OCI-LY7 (cell line): ENCODE measurements at regions of chr3 and their contacts with region 1.

Region 1: GRCh38 chr3:139353920-139354556 is 10.2 kb downstream of the MRPS22 start:
- DNase-seq: peak; percentile 40
- H3K4me3 ChIP-seq: no peak overlapping the region
- H3K27ac ChIP-seq: no peak overlapping the region
- H3K4me1 ChIP-seq: no peaks in the 10 kb centered on the region
- CTCF ChIP-seq: peak; percentile 79

Region 2: DNA sequence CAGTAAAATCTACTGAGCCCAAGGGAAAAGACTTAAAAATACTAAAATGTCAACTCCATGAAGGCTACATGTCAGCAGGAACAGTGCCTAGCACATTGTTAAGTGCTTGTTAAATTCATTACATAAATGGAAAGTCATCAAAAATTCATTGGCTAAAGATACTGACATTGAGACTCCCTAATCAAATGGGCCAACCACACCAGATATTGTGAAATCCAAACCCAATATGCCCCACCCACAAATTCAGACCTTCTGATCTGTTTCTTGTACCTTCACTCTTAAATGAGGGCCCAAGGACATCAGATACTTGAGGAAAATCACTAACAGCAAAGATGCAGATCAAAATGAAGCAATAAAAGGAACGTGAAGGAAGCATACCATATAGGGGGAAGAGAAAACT is 10.5 kb after region 1 on chr3:
- CTCF ChIA-PET with region 1: interaction called, 14 read pairs
- POLR2A ChIA-PET with region 1: interaction called, 13 read pairs
- intact Hi-C with region 1: no loop called
- DNase-seq: no peak
- H3K4me3 ChIP-seq: no peak overlapping the region
- H3K27ac ChIP-seq: no peak overlapping the region
- H3K4me1 ChIP-seq: no peaks in the 10 kb centered on the region
- CTCF ChIP-seq: no peak

Region 3: GRCh38 chr3:140455521-140456214 is 1101.6 kb after region 1 on chr3:
- CTCF ChIA-PET with region 1: no interaction called
- POLR2A ChIA-PET with region 1: no interaction called
- intact Hi-C with region 1: no loop called
- DNase-seq: no peak
- H3K4me3 ChIP-seq: no peak overlapping the region
- H3K27ac ChIP-seq: no peak overlapping the region
- H3K4me1 ChIP-seq: no peaks in the 10 kb centered on the region
- CTCF ChIP-seq: no peak